ENCODE measurements at regions of chr19 and their contacts with region 1.

Region 1: DNA sequence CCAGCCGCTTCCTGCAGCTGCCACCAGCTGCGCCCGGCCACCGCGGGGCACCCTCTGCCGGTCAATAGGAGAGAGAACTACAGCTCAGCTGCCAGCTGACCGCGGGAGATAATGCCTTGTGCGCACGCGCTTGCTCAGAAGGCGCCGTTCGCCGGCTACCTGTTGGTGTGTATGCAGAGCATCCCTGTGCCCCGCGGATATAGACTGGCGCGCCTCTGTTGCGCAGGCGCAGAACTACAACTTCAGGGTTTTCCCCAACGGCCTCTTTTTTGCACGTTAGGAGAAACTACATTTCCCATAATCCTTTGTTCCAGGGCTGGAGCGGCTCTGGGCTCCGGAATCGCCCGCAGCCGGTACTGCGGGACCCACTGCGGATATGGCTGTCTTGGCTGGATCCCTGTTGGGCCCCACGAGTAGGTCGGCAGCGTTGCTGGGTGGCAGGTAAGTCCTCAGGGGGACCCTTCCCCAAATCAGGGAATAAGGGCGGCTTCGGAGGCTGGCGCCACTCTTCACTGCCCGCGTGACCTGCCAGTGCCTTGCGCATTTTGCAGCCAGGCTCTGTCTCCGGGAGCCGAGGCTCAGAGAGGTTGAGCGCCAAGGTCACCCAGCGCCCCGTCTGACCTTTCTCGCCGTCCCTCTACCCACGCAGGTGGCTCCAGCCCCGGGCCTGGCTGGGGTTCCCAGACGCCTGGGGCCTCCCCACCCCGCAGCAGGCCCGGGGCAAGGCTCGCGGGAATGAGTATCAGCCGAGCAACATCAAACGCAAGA is at the start of gene MRPL34:
- DNase-seq: peak; percentile 88
- ATAC-seq: peak; percentile 69
- H3K4me3 Mint-ChIP-seq: peak within 1 kb of the TSS; percentile 88
- H3K27ac Mint-ChIP-seq: peak within 1 kb of the TSS; percentile 91
- H3K4me1 Mint-ChIP-seq: peaks cover 51% of the 10 kb centered on the region
- H3K27me3 Mint-ChIP-seq: no peaks in the 10 kb centered on the region
- CTCF ChIP-seq: no peak
- total RNA-seq, gene MRPL34: 38.2 and 46.1 TPM in 2 replicates

Region 2: DNA sequence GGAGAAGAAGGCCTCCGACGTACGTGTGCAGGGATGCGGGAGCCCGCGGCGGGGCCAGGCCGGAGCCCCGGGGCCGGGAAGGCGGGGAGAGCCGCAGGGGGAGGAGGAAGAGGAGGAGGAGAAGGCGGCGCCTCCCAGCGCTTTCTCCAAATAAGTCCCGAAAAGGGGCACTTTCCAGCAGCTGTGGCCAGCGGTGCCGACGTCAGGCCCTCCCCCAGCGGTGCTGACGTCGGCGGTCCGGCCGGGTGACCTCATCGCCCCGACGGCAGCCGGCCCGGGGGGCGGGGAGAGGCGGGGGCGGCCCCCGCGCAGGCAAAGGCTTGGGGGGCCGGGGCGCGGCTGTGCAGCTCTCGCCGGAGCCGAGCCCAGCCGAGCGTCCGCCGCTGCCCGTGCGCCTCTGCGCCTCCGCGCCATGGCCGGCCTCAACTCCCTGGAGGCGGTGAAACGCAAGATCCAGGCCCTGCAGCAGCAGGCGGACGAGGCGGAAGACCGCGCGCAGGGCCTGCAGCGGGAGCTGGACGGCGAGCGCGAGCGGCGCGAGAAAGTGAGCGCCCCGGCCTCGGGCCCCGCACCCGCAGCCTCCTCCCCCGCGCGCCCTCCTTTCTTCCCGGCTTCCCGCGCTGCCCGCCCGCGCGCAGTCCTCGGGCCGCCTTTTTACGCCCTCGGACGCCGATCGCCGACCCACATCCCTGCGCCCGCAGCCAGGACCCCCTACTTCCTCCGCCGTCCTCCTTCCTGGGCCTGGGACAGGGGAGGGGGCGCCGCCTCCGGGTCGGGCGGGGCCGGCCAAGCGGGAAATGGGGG is 1229.3 kb before region 1 on chr19 and contains the start of gene TPM4:
- CTCF ChIA-PET with region 1: no interaction called
- POLR2A ChIA-PET with region 1: interaction called, 14 read pairs
- intact Hi-C with region 1: no loop called
- DNase-seq: peak; percentile 77
- ATAC-seq: peak; percentile 53
- H3K4me3 Mint-ChIP-seq: peak within 1 kb of the TSS; percentile 90
- H3K27ac Mint-ChIP-seq: peak within 1 kb of the TSS; percentile 98
- H3K4me1 Mint-ChIP-seq: peaks cover 57% of the 10 kb centered on the region
- H3K27me3 Mint-ChIP-seq: no peaks in the 10 kb centered on the region
- CTCF ChIP-seq: no peak
- total RNA-seq, gene TPM4: 238 and 257 TPM in 2 replicates

Region 3: DNA sequence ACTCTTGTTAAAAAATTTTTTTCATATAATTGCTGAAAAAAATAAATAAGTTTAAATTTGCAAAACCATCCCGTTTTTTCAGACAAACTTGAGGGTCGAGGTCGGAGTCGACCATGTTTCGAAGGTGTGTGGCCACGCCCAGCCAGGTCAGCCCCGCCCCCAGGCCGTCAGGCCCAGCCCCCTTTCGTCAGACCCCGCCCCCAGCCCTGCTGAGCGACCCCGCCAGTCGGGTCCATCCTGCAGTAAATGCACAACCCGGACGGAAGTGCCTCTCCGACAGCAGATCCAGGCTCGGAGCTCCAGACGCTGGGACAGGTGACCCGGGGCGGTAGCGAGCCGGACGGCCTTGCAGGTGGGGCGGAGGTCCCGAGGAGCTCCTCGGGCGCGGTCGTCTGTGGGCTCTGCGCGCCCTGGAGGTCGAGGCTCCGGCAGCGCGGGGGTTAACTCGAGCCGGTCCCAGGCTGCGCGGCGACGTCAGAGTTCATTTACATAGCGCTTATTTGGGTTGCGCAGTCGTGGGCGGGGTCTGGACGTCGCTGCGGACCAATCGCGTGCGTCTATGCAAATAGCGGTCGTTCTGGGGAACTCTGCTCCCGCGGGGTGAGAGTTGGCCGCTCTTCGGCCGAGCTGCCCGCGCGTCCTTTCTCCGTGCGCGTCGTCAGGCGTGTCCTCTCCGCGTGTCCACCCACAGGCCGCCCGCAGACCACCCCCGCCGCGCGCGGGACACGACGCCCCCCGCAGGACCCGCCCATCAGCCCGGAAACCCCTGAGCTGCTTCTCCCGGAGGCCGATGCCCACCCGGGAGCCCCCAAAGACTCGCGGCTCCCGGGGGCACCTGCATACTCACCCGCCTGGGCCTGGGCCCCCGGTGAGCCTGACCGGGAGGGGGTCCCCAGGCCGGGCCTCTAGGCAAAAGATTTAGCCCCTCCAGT is 79.4 kb before region 1 on chr19 and contains the start of gene OCEL1:
- CTCF ChIA-PET with region 1: no interaction called
- POLR2A ChIA-PET with region 1: interaction called, 5 read pairs
- intact Hi-C with region 1: loop called (anchors 1 kb)
- DNase-seq: peak; percentile 95
- ATAC-seq: peak; percentile 90
- H3K4me3 Mint-ChIP-seq: peak within 1 kb of the TSS; percentile 95
- H3K27ac Mint-ChIP-seq: peak within 1 kb of the TSS; percentile 97
- H3K4me1 Mint-ChIP-seq: peaks cover 6% of the 10 kb centered on the region
- H3K27me3 Mint-ChIP-seq: no peaks in the 10 kb centered on the region
- CTCF ChIP-seq: no peak
- total RNA-seq, gene OCEL1: 22.4 and 25.8 TPM in 2 replicates

Region 4: GRCh38 chr19:17266975-17267788 is 38.5 kb before region 1 on chr19 and contains the start of gene BABAM1:
- CTCF ChIA-PET with region 1: interaction called, 6 read pairs
- POLR2A ChIA-PET with region 1: interaction called, 8 read pairs
- intact Hi-C with region 1: loop called (anchors 1 kb)
- DNase-seq: peak; percentile 81
- ATAC-seq: peak; percentile 89
- H3K4me3 Mint-ChIP-seq: peak within 1 kb of the TSS; percentile 91
- H3K27ac Mint-ChIP-seq: peak within 1 kb of the TSS; percentile 93
- H3K4me1 Mint-ChIP-seq: peaks cover 29% of the 10 kb centered on the region
- H3K27me3 Mint-ChIP-seq: no peaks in the 10 kb centered on the region
- CTCF ChIP-seq: no peak
- total RNA-seq, gene BABAM1: 121 and 135 TPM in 2 replicates

Region 5: DNA sequence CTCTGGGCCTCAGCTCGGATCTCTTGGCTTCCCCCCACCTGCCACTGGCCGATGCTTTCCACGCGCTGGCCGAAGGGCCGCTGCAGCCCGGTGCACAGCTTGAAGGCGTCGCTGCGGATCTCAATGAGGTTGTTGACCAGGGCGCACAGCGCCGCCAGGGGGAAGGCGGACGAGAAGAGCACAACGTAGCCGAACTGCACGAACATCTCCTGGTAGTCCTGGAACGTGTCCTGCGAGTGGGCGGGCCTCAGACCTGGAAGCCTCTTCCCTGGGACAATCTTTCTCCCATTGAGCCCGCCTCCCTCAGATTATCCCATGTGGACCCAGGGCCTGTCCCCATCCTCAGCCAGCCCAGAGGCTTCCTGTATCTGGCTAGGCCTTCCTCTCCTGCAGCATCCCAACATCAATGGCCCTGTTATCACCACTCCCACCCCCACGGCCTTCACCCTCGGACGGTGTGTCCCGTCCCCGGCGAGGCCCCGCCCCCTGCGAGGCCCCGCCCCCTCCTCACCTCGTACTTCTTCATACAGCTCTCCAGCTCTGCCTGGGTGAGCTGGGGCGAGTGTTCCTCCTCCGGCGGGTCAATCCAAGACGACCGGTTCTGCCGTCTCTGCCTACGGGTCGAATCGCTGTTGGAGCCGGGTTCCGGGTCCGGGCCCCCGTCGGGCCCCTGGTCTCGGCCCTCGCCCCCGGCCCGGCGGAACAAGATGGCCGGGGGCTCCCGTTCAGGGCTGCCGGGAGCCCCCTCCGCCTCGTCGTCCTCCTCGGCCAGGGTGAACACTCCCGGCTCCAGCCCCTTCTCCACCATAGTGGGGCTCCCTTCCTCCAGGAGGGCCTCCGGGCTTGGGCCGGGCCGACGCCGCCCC is 22.2 kb after region 1 on chr19:
- CTCF ChIA-PET with region 1: interaction called, 9 read pairs
- POLR2A ChIA-PET with region 1: interaction called, 24 read pairs
- intact Hi-C with region 1: no loop called
- DNase-seq: peak; percentile 56
- ATAC-seq: peak; percentile 88
- H3K4me3 Mint-ChIP-seq: peak overlapping the region; percentile 77
- H3K27ac Mint-ChIP-seq: no peak overlapping the region
- H3K4me1 Mint-ChIP-seq: peaks cover 16% of the 10 kb centered on the region
- H3K27me3 Mint-ChIP-seq: peaks cover 6% of the 10 kb centered on the region
- CTCF ChIP-seq: no peak

Region 6: DNA sequence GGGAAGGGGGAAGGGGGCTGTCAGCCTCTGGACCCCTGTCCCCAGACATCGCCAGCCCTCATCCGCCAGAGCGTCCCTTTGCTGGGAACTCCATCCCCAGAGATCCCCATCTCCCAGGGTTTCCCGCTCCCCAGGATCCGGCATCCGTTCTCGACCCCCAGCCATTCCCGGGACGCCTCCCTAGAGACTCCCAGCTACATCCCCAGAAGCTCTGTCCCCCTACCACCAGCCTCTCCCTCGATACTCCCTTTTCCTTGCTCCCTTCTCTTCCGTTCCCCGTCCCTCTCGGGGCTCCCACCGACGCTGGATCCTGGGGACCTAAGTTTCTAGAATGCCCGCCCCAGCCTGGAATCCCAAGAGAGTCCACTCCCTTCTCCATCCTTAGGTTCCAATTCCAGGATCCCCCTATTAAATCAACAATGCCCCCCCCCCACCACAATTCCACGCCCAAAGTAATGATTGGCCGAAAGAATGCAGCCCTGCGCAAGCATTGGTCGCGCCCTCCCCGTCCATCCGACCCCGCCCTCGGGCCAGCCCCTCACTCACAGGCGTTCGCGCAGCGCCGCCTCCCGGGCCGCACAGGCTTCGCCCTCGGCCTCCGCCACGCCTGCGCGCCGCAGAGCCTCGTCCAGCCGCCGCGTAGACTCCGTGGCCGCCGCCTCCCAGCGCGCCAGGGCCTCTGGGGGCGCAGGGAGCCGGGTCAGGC is 85.1 kb after region 1 on chr19:
- CTCF ChIA-PET with region 1: interaction called, 11 read pairs
- POLR2A ChIA-PET with region 1: interaction called, 12 read pairs
- intact Hi-C with region 1: no loop called
- DNase-seq: peak; percentile 85
- ATAC-seq: peak; percentile 100
- H3K4me3 Mint-ChIP-seq: peak overlapping the region; percentile 86
- H3K27ac Mint-ChIP-seq: peak overlapping the region; percentile 24
- H3K4me1 Mint-ChIP-seq: peaks cover 21% of the 10 kb centered on the region
- H3K27me3 Mint-ChIP-seq: no peaks in the 10 kb centered on the region
- CTCF ChIP-seq: no peak

Region 7: DNA sequence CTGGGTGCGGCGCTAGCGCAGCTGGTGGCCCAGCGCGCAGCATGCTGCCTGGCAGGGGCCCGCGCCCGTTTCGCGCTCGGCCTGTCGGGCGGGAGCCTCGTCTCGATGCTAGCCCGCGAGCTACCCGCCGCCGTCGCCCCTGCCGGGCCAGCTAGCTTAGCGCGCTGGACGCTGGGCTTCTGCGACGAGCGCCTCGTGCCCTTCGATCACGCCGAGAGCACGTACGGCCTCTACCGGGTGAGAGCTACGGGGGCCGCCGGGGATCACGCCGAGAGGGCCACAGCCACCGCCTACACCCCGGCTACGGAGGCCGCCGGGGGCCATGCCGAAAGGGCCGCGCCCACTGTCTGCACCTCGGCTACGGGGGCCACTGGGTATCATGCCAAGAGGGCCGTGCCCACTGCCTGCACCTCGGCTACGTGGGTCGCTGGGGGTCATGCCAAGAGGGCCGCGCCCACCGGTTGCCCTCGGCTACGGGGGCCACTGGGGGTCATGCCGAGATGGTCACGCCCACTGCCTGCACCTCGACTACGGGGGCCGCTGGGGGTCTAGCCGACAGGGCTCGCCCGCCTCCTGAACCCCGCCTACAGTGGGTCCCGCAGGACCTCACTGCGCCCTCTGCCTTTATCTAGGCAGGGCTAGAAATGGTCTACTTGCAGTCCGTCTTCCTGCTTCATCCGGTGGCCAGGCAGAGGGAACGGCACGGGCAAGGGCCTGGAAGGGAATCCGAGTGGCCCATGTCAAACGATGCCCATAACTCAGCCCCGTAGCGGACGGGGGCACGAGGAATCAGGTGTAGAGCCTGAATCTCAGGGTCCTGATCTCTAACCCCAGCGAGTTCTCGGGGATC is 206.2 kb after region 1 on chr19:
- CTCF ChIA-PET with region 1: no interaction called
- POLR2A ChIA-PET with region 1: no interaction called
- intact Hi-C with region 1: loop called (anchors 1 kb)
- DNase-seq: peak; percentile 95
- ATAC-seq: peak; percentile 82
- H3K4me3 Mint-ChIP-seq: peak overlapping the region; percentile 100
- H3K27ac Mint-ChIP-seq: peak overlapping the region; percentile 98
- H3K4me1 Mint-ChIP-seq: peaks cover 50% of the 10 kb centered on the region
- H3K27me3 Mint-ChIP-seq: no peaks in the 10 kb centered on the region
- CTCF ChIP-seq: no peak

Measured in activated B cell treated with CpG ODN at 0.5 μM for 24 hours (primary cell).